Heart right ventricle (tissue), 16 donors: ENCODE measurements at regions of chr2 and their contacts with region 1.

Region 1: DNA sequence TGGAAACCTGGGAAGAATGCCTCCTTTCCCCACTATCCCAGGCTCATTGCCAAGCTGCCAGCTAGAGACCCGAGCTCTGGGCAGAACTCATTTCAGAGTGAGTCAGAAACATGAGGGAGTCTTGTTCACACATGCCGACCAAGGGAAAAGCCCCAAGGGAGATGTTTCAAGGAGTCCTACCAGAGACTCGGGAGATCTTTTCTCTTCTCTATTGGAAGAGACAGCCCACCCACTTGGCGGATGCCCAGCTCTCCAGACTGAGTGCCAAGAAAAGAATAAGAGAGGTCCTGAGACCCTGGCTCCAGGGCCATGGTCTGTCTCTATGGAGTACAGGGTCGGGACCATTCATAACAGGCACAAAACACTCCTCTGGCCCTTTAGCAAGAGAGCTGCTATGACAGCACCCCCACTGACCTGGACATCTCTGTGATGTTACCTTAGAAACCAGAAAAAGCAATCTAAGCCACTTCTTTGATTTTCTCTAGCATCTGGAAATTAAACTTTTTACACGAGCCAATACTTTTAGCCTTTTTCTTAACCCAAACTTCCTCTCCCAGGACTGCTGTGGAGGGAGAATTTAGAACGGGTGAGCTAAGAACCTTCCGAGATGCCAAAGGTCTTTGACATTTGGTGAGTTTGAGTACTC is 18.5 kb upstream of the IGFBP5 start:
- DNase-seq: peak; percentile 63 to 71
- ATAC-seq: peak; percentile 49 to 79 (median 68)
- H3K4me3 ChIP-seq: no peak overlapping the region
- H3K27ac ChIP-seq: peak overlapping the region in 7 of 10 donors; percentile 36 to 54 (median 45)
- H3K4me1 ChIP-seq: peaks cover 2 to 49% (median 20%) of the 10 kb centered on the region in 9 donors
- H3K27me3 ChIP-seq: peaks cover 0 to 5% (median 0%) of the 10 kb centered on the region in 7 donors
- CTCF ChIP-seq: no peak

Region 2: GRCh38 chr2:216857131-216857550 is 143.3 kb after region 1 on chr2:
- intact Hi-C with region 1: loop called in 1 of 10 experiments (anchors 5 kb)
- DNase-seq: no peak
- ATAC-seq: peak in 1 of 8 donors; percentile 17
- H3K4me3 ChIP-seq: no peak overlapping the region
- H3K27ac ChIP-seq: peak overlapping the region in 1 of 10 donors; percentile 31
- H3K4me1 ChIP-seq: peaks cover 0 to 38% (median 25%) of the 10 kb centered on the region in 9 donors
- H3K27me3 ChIP-seq: no peaks in the 10 kb centered on the region
- CTCF ChIP-seq: no peak

Region 3: DNA sequence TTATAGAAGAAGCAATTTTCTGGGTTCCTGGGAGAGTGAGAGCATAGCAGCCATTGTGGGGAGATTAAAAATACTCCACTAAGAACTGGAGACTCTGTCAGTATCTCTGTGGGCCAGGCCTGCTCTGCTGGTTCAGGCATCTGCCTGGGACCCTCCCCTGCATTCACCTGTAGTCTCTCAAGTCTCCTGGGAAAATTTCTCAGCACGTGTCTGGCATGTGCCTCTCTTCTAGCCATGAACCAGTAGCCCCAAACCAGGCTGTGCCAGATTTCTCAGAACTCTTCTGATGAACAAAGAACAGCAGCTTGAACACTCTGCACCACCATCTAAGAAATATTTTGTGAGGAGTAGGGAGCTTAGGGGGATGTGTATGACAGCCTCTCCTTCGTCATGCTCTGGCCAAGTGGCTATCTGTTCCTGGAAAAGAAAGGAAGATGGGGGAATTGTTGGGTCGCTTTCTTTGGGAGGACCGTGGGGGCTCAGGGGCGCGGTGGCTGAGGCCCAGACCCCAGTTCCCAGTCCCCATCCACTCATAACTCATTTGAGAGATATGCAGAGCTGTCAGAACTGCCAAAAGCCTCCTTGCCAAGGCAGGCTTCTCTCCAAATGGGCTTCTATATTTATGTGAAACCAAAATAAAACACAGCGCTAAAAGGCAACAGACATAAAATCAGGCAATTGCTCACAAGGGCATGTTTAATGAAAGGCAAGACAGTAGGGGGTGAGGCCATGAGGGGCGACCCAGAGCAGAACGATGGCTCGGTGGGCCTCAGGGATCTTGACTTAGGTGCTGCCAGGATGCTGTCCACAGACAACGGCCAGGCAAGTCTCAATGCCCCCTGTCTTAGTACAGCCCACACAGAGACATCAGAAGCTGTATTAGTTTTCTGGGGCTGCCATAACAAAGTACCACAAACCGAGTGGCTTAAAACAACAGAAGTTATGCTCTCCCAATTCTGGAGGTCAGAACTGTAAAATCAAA is 260.8 kb after region 1 on chr2:
- intact Hi-C with region 1: loop called in 1 of 10 experiments (anchors 5 kb)
- DNase-seq: peak; percentile 29 to 30
- ATAC-seq: peak; percentile 59 to 85 (median 68)
- H3K4me3 ChIP-seq: no peak overlapping the region
- H3K27ac ChIP-seq: peak overlapping the region in 6 of 10 donors; percentile 28 to 51 (median 42)
- H3K4me1 ChIP-seq: peaks cover 0 to 27% (median 11%) of the 10 kb centered on the region in 9 donors
- H3K27me3 ChIP-seq: no peaks in the 10 kb centered on the region
- CTCF ChIP-seq: no peak